ENCODE measurements at regions of chr22 and their contacts with region 1.

Region 1: DNA sequence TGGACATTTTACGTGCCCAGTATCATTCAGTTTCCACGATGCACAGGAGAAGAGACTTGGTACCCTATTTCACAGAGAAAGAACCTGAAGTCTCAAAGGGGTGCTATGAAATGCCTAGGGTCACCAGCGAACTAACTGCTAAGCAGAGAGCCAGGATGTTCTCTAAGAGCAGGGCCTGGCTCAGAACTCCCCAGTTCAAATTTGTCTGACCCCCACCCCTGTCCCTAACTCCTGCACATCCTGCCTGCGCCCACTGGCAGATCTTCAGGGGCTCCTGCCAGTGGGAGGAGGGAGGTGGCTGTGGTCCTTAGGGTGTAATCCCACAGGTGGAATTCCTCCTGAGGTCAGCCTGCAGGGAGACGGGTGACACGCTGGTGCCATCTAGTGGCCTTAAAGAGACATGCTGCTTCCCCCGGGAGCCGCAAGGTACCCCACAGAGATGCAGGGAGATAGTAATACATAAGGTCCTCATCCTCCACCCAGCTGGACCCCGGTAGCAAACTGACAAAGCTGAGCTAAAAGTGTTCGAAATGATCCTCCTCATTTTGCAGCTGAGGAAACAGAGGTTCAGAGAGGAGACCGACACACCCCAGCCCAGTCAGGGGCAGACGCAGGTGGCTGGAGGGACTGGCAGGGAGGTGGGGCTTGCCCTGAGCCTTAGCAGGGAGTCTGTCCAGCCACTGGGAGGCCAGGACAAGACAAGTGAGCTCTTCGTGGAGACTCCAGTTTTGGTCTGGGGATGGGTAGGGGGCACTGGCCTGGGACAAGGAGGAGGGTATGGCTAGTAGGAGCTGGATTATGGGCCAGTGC is 34.1 kb downstream of the MB start:
- DNase-seq: peak in 2 of 3 donors; percentile 69 to 75
- ATAC-seq: peak; percentile 80
- H3K4me3 ChIP-seq: no peak overlapping the region
- H3K4me1 ChIP-seq: peaks cover 2% of the 10 kb centered on the region
- CTCF ChIP-seq: peak; percentile 77

Region 2: DNA sequence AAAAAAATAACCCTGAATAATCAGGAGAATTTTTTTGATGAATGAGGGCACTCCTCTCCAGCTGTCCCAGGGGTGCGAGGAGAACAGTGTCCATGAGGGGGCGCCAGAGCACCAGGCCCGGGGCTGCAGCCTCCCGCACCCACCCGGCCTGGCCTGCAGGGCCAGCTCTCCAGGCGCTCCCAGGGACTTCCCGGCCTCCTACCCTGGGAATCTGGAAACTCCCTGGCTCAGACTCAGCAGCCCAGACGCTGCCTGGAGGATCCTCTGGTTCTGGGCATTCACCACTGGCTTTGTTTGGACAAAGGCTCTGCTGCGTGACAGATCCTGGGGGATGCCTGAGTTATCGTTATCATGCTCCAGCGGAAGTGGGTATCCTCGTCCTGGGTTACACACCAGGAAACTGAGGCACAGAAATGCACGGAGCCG is 152.2 kb before region 1 on chr22:
- intact Hi-C with region 1: loop called in 1 of 2 experiments (anchors 5 kb)
- DNase-seq: peak; percentile 88 to 94 (median 93)
- ATAC-seq: peak; percentile 99
- H3K4me3 ChIP-seq: no peak overlapping the region
- H3K4me1 ChIP-seq: peaks cover 7% of the 10 kb centered on the region
- CTCF ChIP-seq: peak; percentile 80

Region 3: DNA sequence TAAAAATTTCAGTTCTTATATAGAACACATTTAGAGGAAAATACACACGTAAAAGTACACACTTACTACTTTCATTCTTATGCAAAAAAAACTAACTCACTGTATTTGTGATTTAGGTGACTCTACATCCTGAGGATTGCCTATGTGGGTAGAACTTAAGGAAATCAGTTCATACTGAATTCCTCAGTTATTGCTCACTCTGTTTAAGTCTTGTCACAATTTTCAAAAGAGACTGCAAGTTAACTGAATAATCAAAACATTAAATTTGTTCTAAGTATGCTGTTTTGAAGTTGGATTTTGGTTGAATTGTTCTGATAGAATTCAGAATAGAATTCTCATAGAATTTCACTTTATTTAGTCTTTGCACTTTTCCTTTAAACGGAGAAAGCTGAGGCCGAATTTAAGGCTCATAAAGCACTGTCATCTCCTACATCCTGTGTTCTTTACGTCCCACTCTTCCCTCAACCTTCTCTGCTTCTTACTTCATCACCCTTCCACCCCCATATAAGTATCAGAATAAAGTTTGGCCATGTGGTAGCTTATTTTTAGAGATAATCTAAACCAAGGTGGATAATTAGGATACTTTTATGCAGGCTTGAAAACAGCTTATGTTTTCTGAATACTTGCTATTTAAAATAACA is 194.4 kb after region 1 on chr22:
- intact Hi-C with region 1: no loop called
- DNase-seq: no peak
- ATAC-seq: no peak
- H3K4me3 ChIP-seq: no peak overlapping the region
- H3K4me1 ChIP-seq: no peaks in the 10 kb centered on the region
- CTCF ChIP-seq: no peak

Region 4: DNA sequence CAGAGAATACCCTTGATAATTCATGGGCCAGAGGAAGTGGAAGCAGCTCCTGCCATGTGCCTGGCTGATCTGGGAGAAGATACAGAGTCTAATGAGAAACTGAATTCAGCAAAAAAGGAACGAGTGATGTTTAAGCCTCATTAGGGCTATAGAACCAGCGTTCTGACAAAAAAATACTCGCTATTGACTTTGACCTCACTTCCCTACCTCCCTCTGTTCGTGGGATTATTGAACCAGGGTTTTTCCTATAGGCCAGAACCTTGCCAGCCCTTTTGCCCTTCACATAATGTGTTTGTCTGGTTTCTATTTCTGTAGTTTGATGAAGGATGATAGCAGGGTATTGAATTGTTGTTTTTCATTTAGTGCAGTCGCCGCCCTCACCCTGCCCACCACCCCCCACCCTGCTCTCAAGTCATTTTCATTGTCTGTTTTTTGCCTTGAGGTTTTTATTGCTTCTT is 453.1 kb after region 1 on chr22:
- intact Hi-C with region 1: no loop called
- DNase-seq: no peak
- ATAC-seq: no peak
- H3K4me3 ChIP-seq: no peak overlapping the region
- H3K4me1 ChIP-seq: no peaks in the 10 kb centered on the region
- CTCF ChIP-seq: no peak

Measured in mucosa of descending colon (tissue), 3 donors.